Naive thymus-derived CD4-positive, alpha-beta T cell (primary cell): ENCODE measurements at regions of chr15 and their contacts with region 1.

Region 1: GRCh38 chr15:72375847-72376581 is at the start of gene HEXA:
- DNase-seq: peak; percentile 91 to 99 (median 95)
- ATAC-seq: peak; percentile 93
- H3K4me3 ChIP-seq: peak within 1 kb of the TSS; percentile 99
- H3K4me3 Mint-ChIP-seq: peak within 1 kb of the TSS; percentile 87 to 96 (median 93)
- H3K27ac ChIP-seq: peak within 1 kb of the TSS; percentile 75
- H3K27ac Mint-ChIP-seq: peak within 1 kb of the TSS; percentile 94 to 100 (median 96)
- H3K4me1 ChIP-seq: peaks cover 21 to 39% of the 10 kb centered on the region in 2 donors
- H3K4me1 Mint-ChIP-seq: peaks cover 39 to 85% (median 64%) of the 10 kb centered on the region in 7 donors
- H3K27me3 ChIP-seq: no peaks in the 10 kb centered on the region
- H3K27me3 Mint-ChIP-seq: no peaks in the 10 kb centered on the region
- total RNA-seq, gene HEXA: 83.1 to 101 (median 94.8) TPM

Region 2: DNA sequence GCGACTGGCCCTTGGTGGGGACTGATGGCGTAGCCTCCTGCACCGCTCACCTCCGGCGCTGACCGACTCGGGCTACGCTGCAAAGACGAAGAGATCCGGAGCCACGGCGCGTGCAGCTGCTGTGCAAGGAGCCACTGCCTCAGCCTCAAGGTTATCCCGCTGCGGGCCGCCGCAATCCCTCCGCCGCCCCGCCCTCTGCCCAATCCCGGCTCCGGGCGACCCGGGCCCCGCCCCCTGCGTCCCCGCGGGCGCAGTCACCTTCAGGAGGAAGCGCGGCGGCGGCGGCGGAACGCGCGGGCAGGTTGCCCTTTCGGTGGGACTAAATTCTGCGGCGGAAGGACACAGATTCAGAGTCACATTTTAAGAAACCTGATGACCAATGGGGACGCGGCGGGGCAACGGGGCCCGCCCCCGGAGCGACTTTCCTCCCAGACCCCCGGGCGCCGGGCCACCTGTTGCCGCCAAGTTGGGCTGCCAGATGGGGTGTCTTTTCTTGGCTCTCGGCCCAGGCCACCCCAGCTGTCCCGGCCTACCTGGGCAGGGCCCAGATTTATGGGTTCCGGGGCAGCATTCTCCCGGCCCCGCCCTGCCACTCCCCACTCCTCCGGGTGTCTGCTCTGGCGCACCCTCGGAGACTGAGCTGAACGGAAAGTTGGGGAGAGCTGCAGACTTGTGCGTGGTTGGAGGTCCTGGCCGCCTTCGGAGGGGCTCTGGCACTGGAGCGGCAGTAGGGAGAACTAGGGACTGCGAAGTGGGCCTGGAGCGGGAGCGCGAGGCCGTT is 144.8 kb before region 1 on chr15 and contains the start of gene PKM:
- CTCF ChIA-PET with region 1: no interaction called
- POLR2A ChIA-PET with region 1: interaction called, 21 read pairs
- intact Hi-C with region 1: loop called (anchors 1 to 5 kb)
- DNase-seq: peak; percentile 82 to 99 (median 88)
- ATAC-seq: peak; percentile 65
- H3K4me3 ChIP-seq: peak within 1 kb of the TSS; percentile 73
- H3K4me3 Mint-ChIP-seq: peak within 1 kb of the TSS; percentile 95 to 100 (median 99)
- H3K27ac ChIP-seq: peak within 1 kb of the TSS; percentile 73
- H3K27ac Mint-ChIP-seq: peak within 1 kb of the TSS; percentile 89 to 99 (median 95)
- H3K4me1 ChIP-seq: peaks cover 34 to 39% of the 10 kb centered on the region in 2 donors
- H3K4me1 Mint-ChIP-seq: peaks cover 40 to 55% (median 50%) of the 10 kb centered on the region in 7 donors
- H3K27me3 ChIP-seq: no peaks in the 10 kb centered on the region
- H3K27me3 Mint-ChIP-seq: peaks cover 0 to 3% (median 0%) of the 10 kb centered on the region in 5 donors
- total RNA-seq, gene PKM: 237 to 1,627 (median 329) TPM

Region 3: DNA sequence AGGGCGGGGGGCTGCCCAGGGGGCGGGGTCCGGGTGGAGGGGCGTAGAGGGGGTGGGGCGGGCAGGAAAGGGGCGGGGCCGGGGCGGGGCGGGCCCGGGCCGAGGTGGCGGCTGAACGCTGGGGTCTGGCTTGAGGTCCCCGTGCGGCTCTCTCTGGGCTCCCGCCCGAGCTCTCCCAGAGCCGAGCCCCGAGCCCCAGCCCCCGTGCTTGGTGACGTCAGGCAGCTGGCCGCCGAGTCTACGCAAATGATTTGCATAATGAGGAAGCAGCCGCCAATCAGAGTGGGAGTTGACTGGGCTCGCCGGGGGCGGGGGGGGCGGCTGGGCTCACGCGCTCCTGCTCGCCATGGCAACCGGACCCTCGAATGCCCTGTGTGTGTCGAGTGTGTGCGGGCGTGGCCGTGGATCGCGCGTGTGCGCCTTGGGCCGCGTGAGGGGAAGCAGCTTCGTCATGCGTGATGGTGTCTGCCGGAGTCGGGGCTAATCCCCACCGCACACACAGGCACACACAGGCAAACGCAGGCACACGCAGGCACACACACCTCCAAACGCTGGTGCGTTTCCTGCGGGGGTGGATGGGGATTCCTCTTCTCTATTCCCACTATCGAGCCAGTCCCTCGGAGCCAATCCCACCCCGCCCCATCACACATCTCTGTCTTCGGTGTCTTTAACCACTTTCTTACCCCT is 55.9 kb before region 1 on chr15 and contains the start of gene CELF6:
- CTCF ChIA-PET with region 1: no interaction called
- POLR2A ChIA-PET with region 1: no interaction called
- intact Hi-C with region 1: loop called in 1 of 2 experiments (anchors 1 kb)
- DNase-seq: peak; percentile 56 to 88 (median 65)
- ATAC-seq: peak; percentile 92
- H3K4me3 ChIP-seq: peak within 1 kb of the TSS; percentile 57
- H3K4me3 Mint-ChIP-seq: peak within 1 kb of the TSS; percentile 78 to 90 (median 86)
- H3K27ac ChIP-seq: no peak within 1 kb of the TSS
- H3K27ac Mint-ChIP-seq: peak within 1 kb of the TSS; percentile 9 to 91 (median 76)
- H3K4me1 ChIP-seq: peaks cover 7 to 10% of the 10 kb centered on the region in 2 donors
- H3K4me1 Mint-ChIP-seq: peaks cover 20 to 25% (median 21%) of the 10 kb centered on the region in 7 donors
- H3K27me3 ChIP-seq: no peaks in the 10 kb centered on the region
- H3K27me3 Mint-ChIP-seq: peaks cover 0 to 34% (median 0%) of the 10 kb centered on the region in 5 donors
- total RNA-seq, gene CELF6: 1.2 to 5.7 (median 3.8) TPM

Region 4: DNA sequence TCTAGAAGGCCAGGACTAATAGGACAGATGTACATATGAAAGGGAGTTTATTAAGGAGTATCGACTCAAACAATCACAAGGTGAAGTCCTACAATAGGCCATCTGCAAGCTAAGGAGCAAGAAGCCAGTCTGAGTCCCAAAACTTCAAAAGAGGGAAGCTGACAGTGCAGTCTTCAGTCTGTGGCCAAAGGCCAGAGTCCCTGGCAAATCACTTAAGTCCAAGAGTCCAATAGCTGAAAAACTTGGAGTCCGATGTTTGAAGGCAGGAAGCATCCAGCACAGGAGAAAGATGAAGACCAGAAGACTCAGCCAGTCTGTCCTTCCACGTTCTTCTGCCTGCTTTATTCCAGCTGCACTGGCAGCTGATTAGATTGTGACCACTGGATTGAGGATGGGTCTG is 45.0 kb before region 1 on chr15:
- CTCF ChIA-PET with region 1: no interaction called
- POLR2A ChIA-PET with region 1: no interaction called
- intact Hi-C with region 1: no loop called
- DNase-seq: no peak
- ATAC-seq: no peak
- H3K4me3 ChIP-seq: no peak overlapping the region
- H3K4me3 Mint-ChIP-seq: no peak overlapping the region
- H3K27ac ChIP-seq: no peak overlapping the region
- H3K27ac Mint-ChIP-seq: no peak overlapping the region
- H3K4me1 ChIP-seq: no peaks in the 10 kb centered on the region
- H3K4me1 Mint-ChIP-seq: no peaks in the 10 kb centered on the region
- H3K27me3 ChIP-seq: no peaks in the 10 kb centered on the region
- H3K27me3 Mint-ChIP-seq: no peaks in the 10 kb centered on the region

Region 5: DNA sequence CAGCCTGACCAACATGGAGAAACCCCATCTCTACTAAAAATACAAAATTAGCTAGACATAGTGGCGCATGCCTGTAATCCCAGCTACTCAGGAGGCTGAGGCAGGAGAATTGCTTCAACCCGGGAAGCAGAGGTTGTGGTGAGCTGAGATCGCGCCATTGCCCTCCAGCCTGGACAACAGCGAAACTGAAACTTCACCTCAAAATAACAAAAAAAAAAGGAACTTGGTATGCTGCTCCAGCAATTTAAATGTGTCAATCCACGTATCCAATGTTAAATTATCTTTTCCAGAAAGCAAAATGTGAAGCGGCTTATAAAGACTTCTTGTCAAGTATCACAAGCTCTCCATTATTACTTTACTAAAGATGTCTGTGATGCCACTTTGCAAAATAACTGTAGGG is 88.2 kb after region 1 on chr15:
- CTCF ChIA-PET with region 1: interaction called, 3 read pairs
- POLR2A ChIA-PET with region 1: interaction called, 21 read pairs
- intact Hi-C with region 1: loop called in 1 of 2 experiments (anchors 1 kb)
- DNase-seq: no peak
- ATAC-seq: no peak
- H3K4me3 ChIP-seq: no peak overlapping the region
- H3K4me3 Mint-ChIP-seq: no peak overlapping the region
- H3K27ac ChIP-seq: no peak overlapping the region
- H3K27ac Mint-ChIP-seq: no peak overlapping the region
- H3K4me1 ChIP-seq: peaks cover 4% of the 10 kb centered on the region in 2 donors
- H3K4me1 Mint-ChIP-seq: peaks cover 0 to 20% (median 13%) of the 10 kb centered on the region in 7 donors
- H3K27me3 ChIP-seq: no peaks in the 10 kb centered on the region
- H3K27me3 Mint-ChIP-seq: no peaks in the 10 kb centered on the region

Region 6: DNA sequence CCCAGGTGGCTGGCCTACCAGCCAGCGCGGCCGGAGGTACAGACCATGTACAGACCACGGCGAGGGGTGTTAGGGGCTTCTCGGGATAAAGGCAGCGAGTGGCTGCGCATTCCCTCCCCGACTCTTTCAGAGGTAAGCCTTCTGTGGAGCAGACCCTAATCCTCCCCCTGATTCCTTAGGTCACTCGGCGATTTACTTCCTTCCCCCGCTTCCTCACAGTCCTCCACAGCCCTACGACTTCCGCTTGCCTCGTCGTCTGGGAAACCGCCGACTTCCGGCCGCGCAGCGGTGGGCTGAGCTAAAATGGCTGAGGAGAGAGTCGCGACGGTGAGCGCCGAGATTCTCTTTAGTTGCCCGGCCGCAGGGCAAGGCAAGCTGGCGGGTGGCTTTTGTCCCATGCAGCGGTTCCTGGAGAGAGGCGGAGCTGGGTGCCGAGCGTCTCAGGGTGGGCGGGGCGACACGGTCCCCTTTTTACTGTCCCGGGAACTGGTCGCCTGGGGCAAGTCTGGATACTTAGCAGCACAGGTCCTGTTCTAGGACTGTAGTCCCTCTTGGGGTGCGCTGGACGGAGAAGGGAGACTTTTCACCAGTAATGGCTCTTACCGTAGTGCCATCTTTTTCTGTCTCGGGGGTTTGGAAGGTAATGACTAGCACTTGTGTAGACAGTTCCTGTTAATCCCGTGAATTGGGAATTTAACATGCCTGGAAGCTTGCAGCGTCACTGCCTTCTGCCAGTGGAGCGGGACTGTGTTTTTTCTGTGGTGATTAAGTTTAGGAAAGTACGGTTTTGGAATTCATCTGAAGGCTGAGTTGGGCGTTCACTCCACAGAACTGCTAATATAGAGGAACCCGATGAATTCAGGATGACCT is 310.1 kb after region 1 on chr15 and contains the starts of genes BBS4 and HIGD2B:
- CTCF ChIA-PET with region 1: no interaction called
- POLR2A ChIA-PET with region 1: no interaction called
- intact Hi-C with region 1: loop called in 1 of 2 experiments (anchors 5 kb)
- DNase-seq: peak; percentile 67 to 88 (median 84)
- ATAC-seq: peak; percentile 97
- H3K4me3 ChIP-seq: peak within 1 kb of the TSS; percentile 99
- H3K4me3 Mint-ChIP-seq: peak within 1 kb of the TSS; percentile 93 to 99 (median 98)
- H3K27ac ChIP-seq: peak within 1 kb of the TSS; percentile 82
- H3K27ac Mint-ChIP-seq: peak within 1 kb of the TSS; percentile 91 to 98 (median 96)
- H3K4me1 ChIP-seq: peaks cover 0 to 5% of the 10 kb centered on the region in 2 donors
- H3K4me1 Mint-ChIP-seq: peaks cover 8 to 25% (median 20%) of the 10 kb centered on the region in 7 donors
- H3K27me3 ChIP-seq: no peaks in the 10 kb centered on the region
- H3K27me3 Mint-ChIP-seq: peaks cover 0 to under 1% (median 0%) of the 10 kb centered on the region in 5 donors
- total RNA-seq, gene BBS4: 11.9 to 26.5 (median 16.2) TPM
- total RNA-seq, gene HIGD2B: 0.57 to 0.69 (median 0.64) TPM in 3 of 5 experiments, not detected in the others

Region 7: GRCh38 chr15:73633111-73633990 is 1257.3 kb after region 1 on chr15 and contains the start of gene NPTN:
- CTCF ChIA-PET with region 1: no interaction called
- POLR2A ChIA-PET with region 1: no interaction called
- intact Hi-C with region 1: loop called in 1 of 2 experiments (anchors 10 kb)
- DNase-seq: peak; percentile 96 to 99 (median 97)
- ATAC-seq: peak; percentile 95
- H3K4me3 ChIP-seq: peak within 1 kb of the TSS; percentile 73
- H3K4me3 Mint-ChIP-seq: peak within 1 kb of the TSS; percentile 79 to 97 (median 90)
- H3K27ac ChIP-seq: peak within 1 kb of the TSS; percentile 74
- H3K27ac Mint-ChIP-seq: peak within 1 kb of the TSS; percentile 71 to 96 (median 85)
- H3K4me1 ChIP-seq: peaks cover 16 to 26% of the 10 kb centered on the region in 2 donors
- H3K4me1 Mint-ChIP-seq: peaks cover 33 to 59% (median 49%) of the 10 kb centered on the region in 7 donors
- H3K27me3 ChIP-seq: no peaks in the 10 kb centered on the region
- H3K27me3 Mint-ChIP-seq: peaks cover 5 to 25% (median 8%) of the 10 kb centered on the region in 5 donors
- total RNA-seq, gene NPTN: 26.8 to 48.2 (median 42.6) TPM